A549 (cell line): ENCODE measurements at regions of chr9 and their contacts with region 1.

Region 1: DNA sequence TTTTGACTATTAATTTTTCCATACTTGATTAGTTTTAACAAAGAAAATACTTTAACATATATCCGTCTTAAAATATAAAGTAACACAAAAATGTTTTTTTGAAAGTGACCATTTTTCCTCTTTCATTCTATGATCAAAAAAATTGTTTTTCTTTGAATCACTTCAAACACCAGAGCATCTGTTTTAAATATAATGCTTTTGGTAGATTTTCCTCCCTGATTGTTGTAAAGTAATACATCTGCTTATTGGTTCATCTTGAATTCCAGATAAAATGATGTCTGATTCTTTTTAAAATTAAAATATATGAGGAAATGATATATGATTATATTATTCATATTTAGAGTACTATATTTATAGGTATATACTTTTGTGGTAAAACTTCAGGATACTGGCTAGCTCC is 76.2 kb upstream of the LPAR1 start:
- DNase-seq: no peak
- ATAC-seq: no peak
- H3K4me3 ChIP-seq: no peak overlapping the region
- H3K27ac ChIP-seq: no peak overlapping the region
- H3K4me1 ChIP-seq: no peaks in the 10 kb centered on the region
- CTCF ChIP-seq: no peak
- EP300 ChIP-seq: no peak
- POLR2A ChIP-seq: no peak
- RAD21 ChIP-seq: no peak

Region 2: GRCh38 chr9:111102793-111103464 is 11.6 kb before region 1 on chr9:
- CTCF ChIA-PET with region 1: interaction called, 10 read pairs
- POLR2A ChIA-PET with region 1: no interaction called
- DNase-seq: no peak
- ATAC-seq: no peak
- H3K4me3 ChIP-seq: no peak overlapping the region
- H3K27ac ChIP-seq: no peak overlapping the region
- H3K4me1 ChIP-seq: no peaks in the 10 kb centered on the region
- CTCF ChIP-seq: no peak
- EP300 ChIP-seq: no peak
- POLR2A ChIP-seq: no peak
- RAD21 ChIP-seq: no peak

Region 3: GRCh38 chr9:111154081-111154562 is 39.6 kb after region 1 on chr9:
- CTCF ChIA-PET with region 1: no interaction called
- POLR2A ChIA-PET with region 1: no interaction called
- DNase-seq: no peak
- ATAC-seq: no peak
- H3K4me3 ChIP-seq: no peak overlapping the region
- H3K27ac ChIP-seq: no peak overlapping the region
- H3K4me1 ChIP-seq: no peaks in the 10 kb centered on the region
- CTCF ChIP-seq: no peak
- EP300 ChIP-seq: no peak
- POLR2A ChIP-seq: no peak
- RAD21 ChIP-seq: no peak

Region 4: GRCh38 chr9:111178331-111179055 is 64.0 kb after region 1 on chr9:
- CTCF ChIA-PET with region 1: no interaction called
- POLR2A ChIA-PET with region 1: no interaction called
- DNase-seq: peak in 1 of 2 experiments; percentile 11
- ATAC-seq: peak in 1 of 2 experiments; percentile 13; a peak in 2 of 6 replicates
- H3K4me3 ChIP-seq: no peak overlapping the region
- H3K27ac ChIP-seq: peak overlapping the region; percentile 49 to 77
- H3K4me1 ChIP-seq: peaks cover 18% of the 10 kb centered on the region
- CTCF ChIP-seq: no peak
- EP300 ChIP-seq: no peak
- POLR2A ChIP-seq: no peak
- RAD21 ChIP-seq: no peak